CD8-positive, alpha-beta T cell (primary cell): ENCODE measurements at regions of chr10 and their contacts with region 1.

Region 1: DNA sequence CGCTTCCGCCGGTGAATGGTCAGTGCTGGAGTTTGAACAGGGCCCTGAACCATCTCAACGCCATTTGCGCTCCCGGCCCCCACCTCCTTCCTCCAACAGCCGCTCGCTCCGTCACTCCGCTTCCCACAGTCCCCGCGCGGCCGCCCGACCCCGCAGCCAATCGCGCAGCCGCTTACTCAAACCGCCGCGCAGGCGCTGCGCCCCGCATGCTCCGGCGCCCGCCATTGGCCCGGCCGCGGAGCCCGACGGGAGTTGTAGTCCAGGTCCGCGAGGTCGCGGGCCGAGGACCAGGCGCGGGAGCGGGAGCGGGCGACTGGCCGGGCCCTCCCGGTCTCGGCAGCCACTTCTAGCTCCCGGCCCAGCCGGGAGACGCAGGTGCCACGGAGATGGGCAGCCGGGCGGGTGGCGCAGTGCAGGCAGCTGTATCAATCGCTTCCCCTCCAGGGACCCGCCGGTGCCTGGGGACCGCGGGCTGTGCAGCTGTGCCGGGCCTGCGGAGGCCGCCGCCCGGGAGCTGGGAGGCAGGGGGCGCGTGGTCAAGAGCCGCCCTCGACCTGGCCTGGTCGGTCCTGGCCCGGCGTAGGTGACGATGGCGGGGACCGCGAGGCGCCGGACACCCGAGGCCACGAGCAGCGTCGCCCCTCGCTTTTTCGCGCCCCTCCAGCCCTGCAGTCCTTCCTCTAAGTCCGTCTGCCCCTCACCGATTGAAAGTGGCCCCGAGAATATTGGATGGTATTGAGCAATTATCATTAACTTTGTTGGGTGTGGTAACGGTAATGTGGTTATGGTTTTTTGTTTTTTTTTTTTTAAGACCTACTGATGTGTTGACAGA is at the start of gene WAPL:
- DNase-seq: peak; percentile 86 to 96 (median 94)
- ATAC-seq: peak; percentile 95
- H3K4me3 ChIP-seq: peak within 1 kb of the TSS; percentile 61 to 92
- H3K4me3 Mint-ChIP-seq: peak within 1 kb of the TSS; percentile 90
- H3K27ac ChIP-seq: peak within 1 kb of the TSS; percentile 77 to 80
- H3K27ac Mint-ChIP-seq: peak within 1 kb of the TSS; percentile 96
- H3K4me1 ChIP-seq: peaks cover 47% of the 10 kb centered on the region
- H3K4me1 Mint-ChIP-seq: peaks cover 68% of the 10 kb centered on the region
- H3K27me3 ChIP-seq: no peaks in the 10 kb centered on the region
- H3K27me3 Mint-ChIP-seq: no peaks in the 10 kb centered on the region
- CTCF ChIP-seq: no peak
- total RNA-seq, gene WAPL: 35.3 to 36.0 TPM

Region 2: GRCh38 chr10:86399879-86400704 is 121.8 kb before region 1 on chr10:
- CTCF ChIA-PET with region 1: interaction called, 7 read pairs
- POLR2A ChIA-PET with region 1: interaction called, 11 read pairs
- intact Hi-C with region 1: loop called (anchors 1 kb)
- DNase-seq: peak; percentile 87 to 97 (median 94)
- ATAC-seq: peak; percentile 78
- H3K4me3 ChIP-seq: peak overlapping the region; percentile 69 to 89
- H3K4me3 Mint-ChIP-seq: peak overlapping the region; percentile 91
- H3K27ac ChIP-seq: peak overlapping the region; percentile 56 to 66
- H3K27ac Mint-ChIP-seq: peak overlapping the region; percentile 90
- H3K4me1 ChIP-seq: peaks cover 13% of the 10 kb centered on the region
- H3K4me1 Mint-ChIP-seq: peaks cover 23% of the 10 kb centered on the region
- H3K27me3 ChIP-seq: peaks cover 0 to 2% of the 10 kb centered on the region in 2 experiments
- H3K27me3 Mint-ChIP-seq: no peaks in the 10 kb centered on the region
- CTCF ChIP-seq: peak; percentile 92

Region 3: DNA sequence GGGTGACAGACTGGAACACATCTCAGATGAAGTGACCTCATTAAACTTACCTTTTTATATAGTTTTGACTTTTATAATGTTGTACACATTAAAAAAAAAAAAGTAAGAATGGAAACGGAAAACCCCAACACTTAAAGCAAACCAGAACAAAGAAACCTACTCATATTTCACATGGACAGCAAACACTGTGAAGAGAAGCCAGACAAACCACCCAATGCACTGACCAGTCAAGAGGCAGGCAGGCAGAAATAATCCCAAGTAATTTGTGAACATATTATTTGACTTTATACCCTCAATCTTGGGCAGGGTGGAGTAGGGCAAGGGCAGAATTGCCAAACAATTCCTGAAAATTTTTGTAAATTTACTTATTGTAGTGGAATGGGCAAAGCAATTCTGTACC is 40.1 kb before region 1 on chr10:
- CTCF ChIA-PET with region 1: interaction called, 3 read pairs
- POLR2A ChIA-PET with region 1: no interaction called
- intact Hi-C with region 1: loop called in 1 of 2 experiments (anchors 5 kb)
- DNase-seq: no peak
- ATAC-seq: no peak
- H3K4me3 ChIP-seq: no peak overlapping the region
- H3K4me3 Mint-ChIP-seq: no peak overlapping the region
- H3K27ac ChIP-seq: no peak overlapping the region
- H3K27ac Mint-ChIP-seq: no peak overlapping the region
- H3K4me1 ChIP-seq: no peaks in the 10 kb centered on the region
- H3K4me1 Mint-ChIP-seq: peaks cover 12% of the 10 kb centered on the region
- H3K27me3 ChIP-seq: no peaks in the 10 kb centered on the region
- H3K27me3 Mint-ChIP-seq: no peaks in the 10 kb centered on the region
- CTCF ChIP-seq: no peak

Region 4: DNA sequence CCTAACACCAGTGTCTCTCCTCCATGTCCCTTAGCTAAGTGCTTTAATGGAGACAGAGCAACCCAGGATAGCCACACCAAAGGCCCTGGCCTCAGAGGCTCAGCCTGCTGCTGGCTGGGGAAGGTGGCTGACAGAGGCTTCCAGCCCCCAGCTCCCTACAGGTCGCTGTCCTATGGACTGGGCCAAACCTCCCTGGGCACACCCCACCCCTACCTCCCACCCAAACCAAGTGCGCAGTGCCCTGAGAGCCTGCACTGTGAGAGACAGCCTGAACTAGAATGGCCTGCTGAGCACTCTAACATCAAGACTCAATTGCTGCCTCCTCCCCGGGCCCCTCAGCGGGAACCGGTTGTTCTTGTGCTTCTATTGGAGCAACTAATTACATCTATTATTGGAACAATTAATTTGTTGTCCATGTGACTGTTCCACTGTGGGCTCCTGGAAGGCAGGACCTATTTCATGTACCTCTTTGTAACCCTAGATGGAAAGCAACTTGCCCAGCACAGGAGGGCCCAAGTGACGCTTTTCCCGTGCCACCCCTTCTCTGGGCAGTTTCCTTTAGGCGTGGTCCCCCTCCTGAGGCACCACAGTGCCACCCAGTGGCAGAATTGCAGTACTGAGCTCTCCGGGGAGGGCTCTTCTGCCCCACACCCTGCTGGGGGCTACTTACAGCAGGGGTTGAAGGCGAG is 63.3 kb after region 1 on chr10:
- CTCF ChIA-PET with region 1: interaction called, 3 read pairs
- POLR2A ChIA-PET with region 1: no interaction called
- intact Hi-C with region 1: loop called in 1 of 2 experiments (anchors 1 kb)
- DNase-seq: peak; percentile 43 to 86 (median 73)
- ATAC-seq: peak; percentile 98
- H3K4me3 ChIP-seq: no peak overlapping the region
- H3K4me3 Mint-ChIP-seq: no peak overlapping the region
- H3K27ac ChIP-seq: no peak overlapping the region
- H3K27ac Mint-ChIP-seq: no peak overlapping the region
- H3K4me1 ChIP-seq: peaks cover 6% of the 10 kb centered on the region
- H3K4me1 Mint-ChIP-seq: peaks cover 3% of the 10 kb centered on the region
- H3K27me3 ChIP-seq: no peaks in the 10 kb centered on the region
- H3K27me3 Mint-ChIP-seq: peaks cover 4% of the 10 kb centered on the region
- CTCF ChIP-seq: peak; percentile 93

Region 5: GRCh38 chr10:86755740-86756510 is 234.0 kb after region 1 on chr10:
- CTCF ChIA-PET with region 1: no interaction called
- POLR2A ChIA-PET with region 1: no interaction called
- intact Hi-C with region 1: loop called in 1 of 2 experiments (anchors 10 kb)
- DNase-seq: peak; percentile 66 to 92 (median 85)
- ATAC-seq: peak; percentile 92
- H3K4me3 ChIP-seq: peak overlapping the region; percentile 72 to 77
- H3K4me3 Mint-ChIP-seq: peak overlapping the region; percentile 86
- H3K27ac ChIP-seq: peak overlapping the region in 1 of 2 experiments; percentile 45
- H3K27ac Mint-ChIP-seq: no peak overlapping the region
- H3K4me1 ChIP-seq: peaks cover 15% of the 10 kb centered on the region
- H3K4me1 Mint-ChIP-seq: peaks cover 31% of the 10 kb centered on the region
- H3K27me3 ChIP-seq: peaks cover 0 to 4% of the 10 kb centered on the region in 2 experiments
- H3K27me3 Mint-ChIP-seq: peaks cover 17% of the 10 kb centered on the region
- CTCF ChIP-seq: no peak

Region 6: DNA sequence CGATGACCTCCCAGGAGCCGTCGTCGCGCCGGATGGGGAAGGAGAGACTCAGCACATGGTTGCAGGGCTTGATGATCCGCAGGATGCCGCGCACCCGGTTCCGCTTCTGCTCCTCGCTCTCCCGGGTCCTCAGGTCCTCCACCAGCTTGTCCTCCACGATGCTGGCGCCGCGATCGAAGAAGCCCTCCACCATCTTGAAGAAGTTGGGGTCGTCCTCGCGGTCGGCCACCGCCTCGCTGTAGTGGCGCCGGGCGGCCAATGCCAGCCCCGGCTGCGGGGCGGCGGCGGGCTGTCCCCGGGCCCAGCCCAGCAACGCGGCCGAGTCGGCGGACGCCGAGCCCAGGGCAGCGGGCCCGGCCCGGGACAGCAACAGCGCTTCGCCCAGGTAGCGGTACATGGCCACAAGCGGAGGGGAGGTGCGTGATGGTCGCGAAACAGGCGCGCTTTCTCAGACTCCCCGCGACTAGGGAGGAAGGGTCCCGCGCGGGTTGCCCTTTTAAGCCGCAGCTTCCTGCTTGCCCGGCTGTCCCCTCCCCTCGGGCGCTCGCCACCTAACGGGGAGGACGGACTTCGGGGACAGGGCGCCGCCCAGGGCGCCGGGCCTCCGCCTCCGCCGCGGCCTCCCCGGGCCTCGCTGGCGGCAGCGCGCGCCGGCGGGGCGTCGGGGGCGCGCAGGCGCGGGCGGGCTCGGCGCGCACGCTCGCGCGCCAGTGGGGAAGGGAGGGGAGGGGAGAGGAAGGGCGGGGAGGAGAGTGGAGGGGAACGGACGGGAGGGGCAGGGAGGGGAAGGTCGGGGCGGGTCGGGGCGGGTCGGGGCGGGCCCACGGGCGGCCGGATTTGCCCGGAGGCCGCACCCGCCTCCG is 572.7 kb after region 1 on chr10 and contains the starts of genes GLUD1 and SHLD2:
- CTCF ChIA-PET with region 1: no interaction called
- POLR2A ChIA-PET with region 1: no interaction called
- intact Hi-C with region 1: loop called in 1 of 2 experiments (anchors 2 kb)
- DNase-seq: peak; percentile 73 to 94 (median 86)
- ATAC-seq: peak; percentile 65
- H3K4me3 ChIP-seq: peak within 1 kb of the TSS; percentile 70 to 71
- H3K4me3 Mint-ChIP-seq: peak within 1 kb of the TSS; percentile 95
- H3K27ac ChIP-seq: peak within 1 kb of the TSS; percentile 84 to 85
- H3K27ac Mint-ChIP-seq: peak within 1 kb of the TSS; percentile 96
- H3K4me1 ChIP-seq: peaks cover 40% of the 10 kb centered on the region
- H3K4me1 Mint-ChIP-seq: peaks cover 64% of the 10 kb centered on the region
- H3K27me3 ChIP-seq: no peaks in the 10 kb centered on the region
- H3K27me3 Mint-ChIP-seq: no peaks in the 10 kb centered on the region
- CTCF ChIP-seq: no peak
- total RNA-seq, gene GLUD1: 69.5 to 70.5 TPM
- total RNA-seq, gene SHLD2: 16.3 to 16.6 TPM